ENCODE measurements at regions of chr3 and their contacts with region 1.

Region 1: GRCh38 chr3:10945683-10946287 is 46.8 kb upstream of the SLC6A1 start:
- DNase-seq: peak in 1 of 2 donors; percentile 62
- H3K4me3 ChIP-seq: no peak overlapping the region
- H3K27ac ChIP-seq: no peak overlapping the region
- H3K4me1 ChIP-seq: no peaks in the 10 kb centered on the region
- H3K27me3 ChIP-seq: peaks cover 0 to 18% of the 10 kb centered on the region in 2 donors
- CTCF ChIP-seq: peak; percentile 38 to 66 (median 64)
- POLR2A ChIP-seq: no peak

Region 2: DNA sequence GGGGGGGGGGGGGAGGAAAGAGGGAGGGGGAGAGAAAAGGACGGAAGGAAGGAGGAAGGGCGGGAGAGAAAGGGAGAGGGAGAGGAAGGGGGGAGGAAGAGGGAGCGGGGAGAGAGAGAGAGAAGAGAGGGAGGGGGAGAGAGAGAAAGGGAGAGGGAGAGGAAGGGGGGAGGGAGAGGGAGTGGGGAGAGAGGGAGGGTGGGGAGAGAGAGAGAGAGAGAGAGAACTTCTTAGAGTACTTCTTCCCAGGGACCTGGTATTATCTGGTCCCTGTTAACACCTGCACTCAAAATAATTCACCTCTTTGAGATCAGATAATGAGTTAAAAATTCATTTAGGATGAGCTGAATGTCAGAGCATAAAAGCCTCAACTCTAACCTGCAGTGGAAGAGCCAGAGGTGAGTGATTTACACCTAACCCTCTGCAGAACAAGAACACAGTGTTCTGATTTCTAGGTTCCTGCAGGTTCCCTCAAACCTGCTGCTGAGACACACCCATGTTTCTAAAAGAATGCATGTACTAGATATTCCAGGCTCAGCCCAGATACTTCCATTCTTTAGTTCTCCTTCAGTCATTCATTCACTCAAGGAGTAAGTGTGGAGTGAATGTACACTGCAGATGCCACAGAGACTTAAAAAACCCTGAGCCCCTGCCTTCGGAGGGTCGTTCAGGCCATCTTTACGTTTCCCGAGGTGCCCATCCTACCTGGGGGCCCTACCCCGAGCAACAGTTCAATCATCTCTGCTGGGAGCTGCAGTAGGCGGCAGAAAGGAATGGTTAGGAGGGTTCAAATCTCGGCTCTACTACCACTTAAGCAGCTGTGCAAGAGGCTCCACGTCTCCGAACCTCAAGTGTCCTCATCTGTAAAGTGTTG is 625.7 kb before region 1 on chr3:
- intact Hi-C with region 1: no loop called
- DNase-seq: no peak
- H3K4me3 ChIP-seq: peak overlapping the region; percentile 85 to 99 (median 97)
- H3K27ac ChIP-seq: peak overlapping the region; percentile 89 to 90
- H3K4me1 ChIP-seq: peaks cover 0 to 5% of the 10 kb centered on the region in 2 donors
- H3K27me3 ChIP-seq: no peaks in the 10 kb centered on the region
- CTCF ChIP-seq: no peak
- POLR2A ChIP-seq: no peak

Region 3: DNA sequence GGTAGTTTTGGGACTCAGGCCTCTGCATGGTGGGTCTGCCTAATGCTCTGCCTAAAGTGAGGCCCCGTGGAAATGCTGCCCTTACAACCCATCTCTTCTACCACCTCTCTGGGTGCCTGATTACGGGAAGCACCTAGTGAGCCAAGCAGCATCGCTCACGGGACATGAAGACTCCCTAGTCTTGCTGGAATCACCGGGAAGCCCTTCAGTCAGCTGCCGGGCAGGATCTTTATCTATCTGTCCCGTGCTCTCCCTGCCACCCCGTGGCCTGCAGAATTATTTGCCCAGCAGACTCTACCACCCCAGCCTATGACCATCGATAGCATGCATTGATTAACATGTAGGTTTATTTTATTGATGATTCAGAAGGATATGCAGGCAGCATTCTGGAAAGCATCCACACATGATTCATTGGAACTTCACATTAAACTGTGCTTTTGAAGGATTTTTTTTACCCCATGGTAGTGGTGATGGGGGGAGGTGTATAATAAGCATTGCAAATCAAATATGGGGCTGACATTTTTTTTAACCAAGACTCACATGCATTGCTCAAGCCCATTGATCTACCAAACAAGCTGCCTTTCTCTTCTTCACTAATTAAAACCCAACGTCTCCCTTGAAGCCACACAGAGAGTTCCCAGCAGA is 503.5 kb before region 1 on chr3:
- intact Hi-C with region 1: loop called (anchors 5 kb)
- DNase-seq: no peak
- H3K4me3 ChIP-seq: no peak overlapping the region
- H3K27ac ChIP-seq: no peak overlapping the region
- H3K4me1 ChIP-seq: no peaks in the 10 kb centered on the region
- H3K27me3 ChIP-seq: no peaks in the 10 kb centered on the region
- CTCF ChIP-seq: no peak
- POLR2A ChIP-seq: no peak

Region 4: DNA sequence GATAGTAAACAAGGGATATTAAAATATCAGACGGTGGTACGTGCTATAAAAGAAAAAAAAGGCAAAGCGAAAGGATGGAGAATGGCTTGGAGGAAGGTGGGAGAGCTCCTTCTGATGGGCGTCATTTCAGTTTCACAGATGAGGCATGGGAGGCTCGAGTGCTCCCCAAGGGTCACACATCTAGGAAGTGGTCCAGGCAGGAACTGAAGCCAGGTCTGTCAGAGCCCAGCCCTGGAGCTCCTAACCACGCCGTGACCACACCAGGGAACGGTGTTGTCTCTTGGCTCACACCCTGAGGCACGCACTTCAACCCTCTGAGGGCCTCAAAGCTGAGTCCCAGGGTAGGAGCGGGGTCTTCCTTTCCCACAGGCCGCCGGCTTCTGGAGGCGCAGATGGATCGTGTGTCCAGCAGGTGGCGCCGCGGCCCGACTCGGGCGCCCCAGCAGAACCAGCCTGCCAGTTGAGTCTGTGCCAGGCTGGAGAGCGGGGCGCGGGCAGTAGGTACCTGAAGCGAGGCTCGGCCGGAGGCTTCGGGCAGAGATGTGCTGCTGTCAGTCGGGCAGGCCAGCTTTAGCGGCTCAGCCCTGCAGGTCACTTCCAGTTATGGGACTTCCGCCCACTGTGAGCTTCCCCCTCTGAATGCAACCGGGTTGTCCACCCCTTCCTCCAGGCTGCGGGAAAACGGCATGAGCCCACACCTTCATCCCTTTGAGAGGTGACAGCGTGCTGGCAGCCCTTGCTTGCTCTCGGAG is 114.9 kb after region 1 on chr3:
- intact Hi-C with region 1: loop called (anchors 10 kb)
- DNase-seq: peak; percentile 21 to 61
- H3K4me3 ChIP-seq: peak overlapping the region; percentile 12 to 60 (median 35)
- H3K27ac ChIP-seq: no peak overlapping the region
- H3K4me1 ChIP-seq: peaks cover 0 to 3% of the 10 kb centered on the region in 2 donors
- H3K27me3 ChIP-seq: peaks cover 0 to 28% of the 10 kb centered on the region in 2 donors
- CTCF ChIP-seq: peak; percentile 66 to 68 (median 67)
- POLR2A ChIP-seq: no peak

Region 5: DNA sequence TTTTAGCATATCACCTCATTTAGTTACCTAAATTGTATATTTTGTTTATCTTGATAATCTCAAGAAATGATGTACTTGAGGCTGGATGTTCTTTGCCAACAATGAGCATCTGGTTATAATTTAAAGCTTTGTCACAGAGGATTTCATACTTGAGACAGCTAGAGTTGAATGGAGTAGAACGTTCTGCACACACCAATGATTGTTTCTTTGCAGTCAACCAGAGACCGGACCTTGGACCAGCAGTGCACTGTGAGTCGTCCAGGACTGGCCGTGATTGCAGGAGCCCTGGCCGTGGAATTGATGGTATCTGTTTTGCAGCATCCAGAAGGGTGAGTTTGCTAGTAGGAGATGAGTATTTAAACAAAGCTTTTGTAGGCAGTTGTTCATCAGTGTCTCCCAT is 416.8 kb after region 1 on chr3:
- intact Hi-C with region 1: loop called (anchors 5 kb)
- DNase-seq: no peak
- H3K4me3 ChIP-seq: no peak overlapping the region
- H3K27ac ChIP-seq: no peak overlapping the region
- H3K4me1 ChIP-seq: no peaks in the 10 kb centered on the region
- H3K27me3 ChIP-seq: no peaks in the 10 kb centered on the region
- CTCF ChIP-seq: no peak
- POLR2A ChIP-seq: no peak

Region 6: GRCh38 chr3:11400213-11400612 is 454.4 kb after region 1 on chr3:
- intact Hi-C with region 1: no loop called
- DNase-seq: no peak
- H3K4me3 ChIP-seq: no peak overlapping the region
- H3K27ac ChIP-seq: no peak overlapping the region
- H3K4me1 ChIP-seq: no peaks in the 10 kb centered on the region
- H3K27me3 ChIP-seq: no peaks in the 10 kb centered on the region
- CTCF ChIP-seq: no peak
- POLR2A ChIP-seq: no peak

Measured in breast epithelium (tissue), 4 donors.